HepG2 (cell line): ENCODE measurements at regions of chr7 and their contacts with region 1.

Region 1: GRCh38 chr7:26151953-26152781 is at the start of gene NFE2L3:
- DNase-seq: peak; percentile 76
- ATAC-seq: peak; percentile 83
- H3K4me3 ChIP-seq: peak within 1 kb of the TSS; percentile 58 to 72 (median 70)
- H3K27ac ChIP-seq: no peak within 1 kb of the TSS
- H3K4me1 ChIP-seq: peaks cover 53% of the 10 kb centered on the region
- H3K27me3 ChIP-seq: peaks cover 0 to 13% of the 10 kb centered on the region in 2 experiments; a peak in 3 of 5 replicates
- CTCF ChIP-seq: peak; percentile 48; the same call in 1 of the 2 replicates
- EP300 ChIP-seq: no peak
- POLR2A ChIP-seq: peak; percentile 34 to 69; a peak in 3 of 4 replicates
- RAD21 ChIP-seq: peak; percentile 19
- total RNA-seq, gene NFE2L3: 8.8 and 19.4 TPM in 2 replicates

Region 2: DNA sequence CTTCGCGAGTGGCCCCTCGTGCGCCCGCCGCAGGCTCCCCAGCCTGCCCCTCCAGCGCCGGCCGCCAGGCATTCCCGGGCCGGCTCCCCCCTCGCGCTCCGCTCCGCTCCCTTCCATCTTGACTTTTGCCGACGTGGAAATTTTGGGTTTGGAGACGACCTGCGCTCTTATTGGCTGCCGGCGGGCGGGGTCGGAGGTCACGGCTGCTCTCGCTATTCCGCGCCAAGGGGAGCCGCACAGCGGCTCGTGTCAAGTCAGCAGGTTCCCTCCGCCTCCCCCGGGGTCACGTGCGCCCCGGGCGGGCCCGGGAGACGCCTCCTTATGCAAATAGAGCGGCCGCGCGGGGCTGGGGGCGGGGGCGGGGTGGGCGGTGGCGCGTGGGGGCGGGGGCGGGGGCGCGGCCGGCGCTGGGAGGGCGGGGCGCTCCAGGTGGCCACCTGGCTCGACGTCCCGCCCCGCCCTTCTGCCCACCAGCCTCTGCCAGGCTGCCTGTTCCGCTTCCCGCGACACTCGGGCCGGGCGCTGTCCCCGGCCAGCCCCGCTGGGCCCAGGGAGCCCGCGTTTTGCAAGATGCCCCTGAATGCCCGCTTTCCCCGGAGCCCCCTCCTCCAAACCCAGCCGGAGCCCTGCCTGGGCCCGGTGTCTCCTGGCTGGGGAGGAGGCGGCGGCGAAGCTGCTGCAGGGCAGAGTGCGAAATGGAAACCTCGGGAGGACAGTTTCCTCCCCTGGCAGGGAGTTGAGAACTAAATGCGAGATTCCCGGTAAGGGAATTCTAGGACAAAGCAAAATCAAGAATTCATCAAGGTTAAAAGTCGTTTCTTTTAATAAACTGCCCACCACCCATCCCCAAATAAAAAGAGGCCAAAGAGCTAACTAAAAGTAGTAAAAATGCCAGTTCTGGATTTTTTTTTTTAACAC is 200.9 kb before region 1 on chr7:
- CTCF ChIA-PET with region 1: no interaction called
- POLR2A ChIA-PET with region 1: interaction called, 3 read pairs
- in situ Hi-C with region 1: no loop called
- intact Hi-C with region 1: loop called (anchors 5 kb)
- DNase-seq: peak; percentile 88
- ATAC-seq: peak; percentile 74
- H3K4me3 ChIP-seq: peak overlapping the region; percentile 79 to 89 (median 85)
- H3K27ac ChIP-seq: peak overlapping the region; percentile 88
- H3K4me1 ChIP-seq: peaks cover 40% of the 10 kb centered on the region
- H3K27me3 ChIP-seq: no peaks in the 10 kb centered on the region
- CTCF ChIP-seq: no peak
- EP300 ChIP-seq: no peak
- POLR2A ChIP-seq: peak; percentile 63 to 70
- RAD21 ChIP-seq: peak; percentile 25

Region 3: DNA sequence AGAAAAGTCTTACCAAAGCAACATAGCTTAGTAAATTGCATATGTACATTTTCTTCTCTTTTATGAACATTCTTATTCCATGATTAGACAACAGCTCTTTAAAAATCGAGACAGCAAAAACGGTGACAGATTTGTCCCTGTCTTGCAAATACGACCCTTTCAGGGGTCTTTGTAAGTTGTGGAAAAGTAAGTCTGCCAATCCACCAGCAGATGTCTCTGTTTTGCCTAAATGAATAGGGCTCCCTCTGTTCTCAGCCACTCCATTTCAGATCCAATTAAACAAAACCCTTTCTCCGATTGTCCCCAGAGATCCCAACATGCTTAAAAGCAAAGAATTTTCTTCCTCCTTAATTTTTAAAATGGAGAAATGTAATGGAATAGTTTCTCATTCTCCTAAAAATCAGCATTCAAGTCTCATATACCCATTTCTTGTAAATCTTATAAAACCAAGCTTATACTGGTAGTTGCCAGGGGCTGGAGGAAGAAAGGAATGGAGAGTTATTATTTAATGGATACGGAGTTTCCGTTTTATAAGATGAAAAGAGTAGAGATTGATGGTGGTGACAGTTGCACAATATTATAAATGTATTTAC is 61.1 kb before region 1 on chr7:
- CTCF ChIA-PET with region 1: no interaction called
- POLR2A ChIA-PET with region 1: no interaction called
- in situ Hi-C with region 1: no loop called
- intact Hi-C with region 1: loop called (anchors 10 kb)
- DNase-seq: peak; percentile 54
- ATAC-seq: peak; percentile 70
- H3K4me3 ChIP-seq: no peak overlapping the region
- H3K27ac ChIP-seq: no peak overlapping the region
- H3K4me1 ChIP-seq: peaks cover 15% of the 10 kb centered on the region
- H3K27me3 ChIP-seq: 0 out of 5 replicates have a peak, but pooled peaks cover 0 to 3% of the 10 kb centered on the region in 2 experiments
- CTCF ChIP-seq: peak; percentile 72
- EP300 ChIP-seq: no peak
- POLR2A ChIP-seq: no peak
- RAD21 ChIP-seq: peak; percentile 30; the same call in 1 of the 2 replicates

Region 4: DNA sequence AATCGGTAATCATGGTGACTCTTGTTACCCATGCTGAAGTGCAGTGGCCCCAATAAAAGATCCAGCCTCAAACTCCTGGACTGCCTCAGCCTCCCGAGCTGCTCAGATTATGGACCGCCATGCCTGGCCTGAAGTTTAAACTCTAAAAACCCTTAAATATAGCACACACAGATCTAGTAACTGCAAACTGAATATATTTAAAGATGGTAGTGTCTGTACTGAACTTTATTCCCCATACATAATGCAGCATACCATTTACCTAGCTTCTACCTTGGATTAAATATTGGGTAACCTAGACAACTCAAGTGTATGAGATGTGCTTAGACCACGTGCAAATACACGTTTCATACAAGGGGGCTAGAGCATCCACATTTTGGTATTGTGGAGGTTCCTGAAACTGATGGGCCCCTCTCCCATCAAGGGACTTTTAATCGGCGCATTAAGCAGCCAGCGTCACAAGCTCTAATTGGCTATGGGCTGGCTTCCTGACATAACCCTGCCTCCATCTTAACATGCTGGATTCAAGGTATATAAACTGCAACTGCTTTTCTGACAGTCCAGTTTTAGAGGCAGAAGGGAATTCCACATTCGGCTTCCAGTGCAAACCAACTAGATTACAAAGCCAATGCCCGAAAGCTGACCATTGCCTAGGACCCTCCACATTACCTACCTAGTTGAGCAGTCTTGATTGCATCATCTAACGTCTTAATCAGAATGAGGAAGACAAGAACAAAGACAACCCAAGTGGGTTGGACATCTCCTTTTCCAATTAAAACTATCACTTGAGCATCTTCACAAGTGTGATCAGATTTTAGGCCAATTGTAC is 35.4 kb after region 1 on chr7:
- CTCF ChIA-PET with region 1: no interaction called
- POLR2A ChIA-PET with region 1: interaction called, 12 read pairs
- in situ Hi-C with region 1: no loop called
- intact Hi-C with region 1: no loop called
- DNase-seq: no peak
- ATAC-seq: peak; percentile 2
- H3K4me3 ChIP-seq: no peak overlapping the region
- H3K27ac ChIP-seq: no peak overlapping the region
- H3K4me1 ChIP-seq: peaks cover 20% of the 10 kb centered on the region
- H3K27me3 ChIP-seq: no peaks in the 10 kb centered on the region
- CTCF ChIP-seq: no peak
- EP300 ChIP-seq: no peak
- POLR2A ChIP-seq: peak; percentile 50 to 76
- RAD21 ChIP-seq: no peak; the same call in 1 of the 2 replicates